ENCODE measurements at regions of chr14 and their contacts with region 1.

Region 1: GRCh38 chr14:91060351-91061055 is at the start of gene RPS6KA5:
- DNase-seq: peak; percentile 100
- ATAC-seq: peak; percentile 96 to 99 (median 98)
- H3K4me3 ChIP-seq: peak within 1 kb of the TSS; percentile 73 to 98 (median 90)
- H3K27ac ChIP-seq: peak within 1 kb of the TSS; percentile 82 to 98 (median 94)
- H3K4me1 ChIP-seq: peaks cover 0 to 41% (median 10%) of the 10 kb centered on the region in 9 donors
- H3K27me3 ChIP-seq: no peaks in the 10 kb centered on the region
- CTCF ChIP-seq: peak in 7 of 9 donors; percentile 15 to 48 (median 28)
- total RNA-seq, gene RPS6KA5: 7.3 to 22.5 (median 9.4) TPM

Region 2: DNA sequence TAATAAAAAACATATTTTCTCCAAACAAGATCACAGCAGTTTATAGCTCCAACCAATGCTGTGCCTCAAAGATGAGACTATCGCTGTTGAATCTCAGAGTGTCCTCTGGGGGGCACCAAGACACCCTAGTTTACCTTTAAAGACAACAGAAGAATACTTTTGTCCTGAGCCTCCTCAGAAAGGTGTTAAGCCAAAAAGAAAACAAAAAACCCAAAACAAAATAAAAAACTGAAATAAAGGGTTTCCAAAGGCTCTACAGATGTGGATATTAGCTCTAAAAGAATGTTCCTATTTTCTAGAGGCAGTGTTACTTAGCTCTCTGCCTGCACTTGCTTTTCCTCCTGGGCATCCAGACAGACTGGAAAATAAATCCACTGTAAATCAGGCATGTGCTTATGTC is 157.4 kb before region 1 on chr14:
- intact Hi-C with region 1: loop called in 3 of 10 experiments (anchors 5 to 10 kb)
- DNase-seq: peak in 1 of 2 donors; percentile 58
- ATAC-seq: peak in 7 of 8 donors; percentile 72 to 88 (median 81)
- H3K4me3 ChIP-seq: no peak overlapping the region
- H3K27ac ChIP-seq: no peak overlapping the region
- H3K4me1 ChIP-seq: no peaks in the 10 kb centered on the region
- H3K27me3 ChIP-seq: no peaks in the 10 kb centered on the region
- CTCF ChIP-seq: peak; percentile 29 to 84 (median 74)

Region 3: DNA sequence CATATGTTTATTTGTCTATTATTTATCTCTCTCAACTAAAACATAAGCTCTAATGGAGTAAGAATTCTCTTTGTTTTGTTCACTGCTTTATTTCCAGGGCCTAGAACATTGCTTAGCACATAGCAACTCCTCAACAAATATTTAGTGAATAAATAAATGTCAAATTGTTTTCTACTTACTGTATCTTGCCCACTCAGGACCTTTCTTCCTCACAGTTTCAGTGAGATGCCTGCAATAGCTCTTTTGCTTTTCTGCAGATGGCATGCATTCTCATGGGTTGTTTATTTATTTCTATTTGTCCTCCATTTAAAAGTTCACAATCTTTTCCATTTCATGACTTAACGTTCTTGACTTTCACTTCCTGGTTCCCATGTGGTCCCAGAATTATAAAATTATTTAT is 149.4 kb before region 1 on chr14:
- intact Hi-C with region 1: loop called in 3 of 10 experiments (anchors 5 to 10 kb)
- DNase-seq: no peak
- ATAC-seq: no peak
- H3K4me3 ChIP-seq: no peak overlapping the region
- H3K27ac ChIP-seq: no peak overlapping the region
- H3K4me1 ChIP-seq: no peaks in the 10 kb centered on the region
- H3K27me3 ChIP-seq: no peaks in the 10 kb centered on the region
- CTCF ChIP-seq: no peak

Region 4: DNA sequence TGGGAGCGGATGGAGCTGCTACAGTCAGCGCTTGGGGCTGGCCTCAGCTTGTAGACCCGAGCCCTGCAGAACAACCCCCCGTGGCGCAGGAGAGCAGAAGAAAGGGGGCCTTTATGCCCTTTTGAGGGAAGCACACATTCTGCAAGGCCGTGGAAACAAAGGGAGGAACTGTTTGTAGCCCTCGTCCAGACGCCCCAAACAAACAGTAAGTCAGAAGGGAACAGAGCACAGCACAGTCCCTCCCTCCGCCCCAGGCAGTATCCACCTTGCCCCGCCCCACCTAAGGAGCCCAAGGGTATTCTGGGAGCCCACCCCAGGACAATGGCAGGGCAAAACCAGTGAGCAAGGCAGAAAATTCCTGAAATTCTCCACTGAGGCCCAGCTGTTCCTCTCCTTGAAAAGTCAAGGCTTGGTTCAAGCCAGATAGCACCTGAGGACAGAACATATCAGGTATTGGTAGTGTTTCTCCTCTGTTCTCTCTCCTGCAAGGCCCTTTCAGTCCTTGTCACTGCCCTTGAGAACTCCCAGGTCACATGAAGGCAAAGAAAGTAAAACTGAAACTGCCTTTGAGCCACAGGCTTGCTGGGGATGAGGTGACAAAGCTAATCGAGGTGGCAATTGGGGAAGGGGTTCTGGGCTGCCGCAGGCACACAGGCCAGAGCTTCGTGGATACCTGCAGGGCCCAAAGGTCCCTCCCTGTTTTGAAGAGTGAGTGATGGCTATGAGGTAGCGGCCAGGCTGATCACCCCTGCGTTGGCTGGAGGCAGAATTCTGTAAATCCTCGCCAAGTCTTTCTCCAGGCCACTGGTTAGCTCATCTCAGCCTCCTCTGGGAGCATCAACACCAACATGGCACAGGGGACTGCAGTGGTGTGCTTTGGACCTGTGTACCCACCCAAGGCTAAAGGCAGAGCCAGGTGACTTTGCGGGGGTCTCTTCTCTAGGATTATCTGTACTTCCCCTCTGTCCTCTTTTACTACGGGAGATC is 53.9 kb after region 1 on chr14:
- intact Hi-C with region 1: loop called in 2 of 10 experiments (anchors 1 kb)
- DNase-seq: peak; percentile 21 to 68
- ATAC-seq: peak; percentile 75 to 89 (median 84)
- H3K4me3 ChIP-seq: peak overlapping the region; percentile 59 to 82 (median 72)
- H3K27ac ChIP-seq: peak overlapping the region; percentile 90 to 98 (median 94)
- H3K4me1 ChIP-seq: peaks cover 10 to 54% (median 51%) of the 10 kb centered on the region in 9 donors
- H3K27me3 ChIP-seq: no peaks in the 10 kb centered on the region
- CTCF ChIP-seq: no peak

Region 5: GRCh38 chr14:91119556-91120311 is 59.2 kb after region 1 on chr14:
- intact Hi-C with region 1: loop called in 3 of 10 experiments (anchors 1 to 10 kb)
- DNase-seq: no peak
- ATAC-seq: peak in 2 of 8 donors; percentile 25 to 74
- H3K4me3 ChIP-seq: no peak overlapping the region
- H3K27ac ChIP-seq: peak overlapping the region in 9 of 10 donors; percentile 11 to 75 (median 31)
- H3K4me1 ChIP-seq: peaks cover 17 to 83% (median 72%) of the 10 kb centered on the region in 9 donors
- H3K27me3 ChIP-seq: no peaks in the 10 kb centered on the region
- CTCF ChIP-seq: no peak

Region 6: DNA sequence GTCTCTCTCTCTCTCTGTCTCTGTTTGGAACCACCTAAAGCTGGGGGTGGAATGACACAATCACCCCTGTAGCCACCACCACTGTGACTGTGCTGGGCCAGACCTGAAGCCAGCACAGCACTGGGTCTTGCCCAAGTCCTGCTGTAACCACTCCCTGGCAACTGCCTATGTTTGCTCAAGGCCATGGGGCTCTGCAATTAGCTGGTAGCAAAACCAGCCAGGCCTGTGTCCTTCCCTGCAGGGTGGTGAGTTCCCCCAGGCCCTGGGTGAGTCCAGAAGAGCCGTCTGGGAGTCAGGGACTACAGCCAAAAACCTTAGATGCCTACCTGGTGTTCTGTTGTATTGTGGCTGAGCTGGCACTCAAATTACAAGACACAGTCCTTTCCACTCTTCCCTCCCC is 104.2 kb after region 1 on chr14:
- intact Hi-C with region 1: loop called in 1 of 10 experiments (anchors 5 kb)
- DNase-seq: peak; percentile 38 to 48
- ATAC-seq: peak; percentile 21 to 82 (median 74)
- H3K4me3 ChIP-seq: no peak overlapping the region
- H3K27ac ChIP-seq: peak overlapping the region in 7 of 10 donors; percentile 7 to 71 (median 51)
- H3K4me1 ChIP-seq: peaks cover 0 to 45% (median 12%) of the 10 kb centered on the region in 9 donors
- H3K27me3 ChIP-seq: no peaks in the 10 kb centered on the region
- CTCF ChIP-seq: no peak

Region 7: DNA sequence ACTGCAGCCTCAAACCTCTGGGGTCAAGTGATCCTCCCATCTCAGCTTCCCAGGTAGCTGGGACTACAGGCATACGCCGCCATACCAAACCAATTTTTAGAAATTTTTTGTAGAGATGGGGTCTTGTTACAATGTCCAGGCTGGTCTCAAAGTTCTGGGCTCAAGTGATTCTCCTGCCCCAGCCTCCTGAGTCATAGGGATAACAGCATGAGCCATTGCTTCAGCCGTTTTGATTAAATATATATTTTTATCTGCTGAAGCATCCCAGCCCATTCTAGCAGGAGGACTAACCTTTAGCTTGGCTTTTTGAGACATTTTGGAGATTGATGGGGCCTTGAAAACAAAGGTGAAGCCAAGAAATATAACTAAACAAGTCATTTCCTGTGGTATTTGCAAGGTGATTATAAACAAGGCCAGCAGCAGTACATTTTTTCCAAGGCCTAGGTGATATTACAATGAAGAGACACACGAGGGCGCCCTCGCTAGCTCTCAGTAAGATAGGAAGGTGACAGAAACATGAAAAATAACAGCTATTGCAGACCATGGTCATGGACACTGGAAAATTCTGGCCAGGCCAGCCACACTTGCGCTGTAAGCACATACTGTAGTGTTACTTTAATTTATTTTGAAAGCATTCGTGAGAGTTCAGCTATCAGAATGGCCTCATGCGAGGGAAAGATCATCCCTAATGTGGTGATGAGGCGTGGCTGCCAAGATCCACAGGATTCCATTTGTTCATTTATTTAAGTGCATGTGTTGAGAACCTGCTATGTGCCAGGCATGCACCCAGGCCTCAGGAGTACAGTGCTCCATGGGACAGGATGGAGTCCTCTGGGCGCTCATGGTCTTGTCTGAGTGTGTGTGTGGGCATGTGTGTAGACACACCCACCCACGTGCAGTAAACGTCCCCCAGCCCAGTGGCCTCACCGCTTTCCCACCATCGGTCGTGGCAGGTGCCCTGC is 116.9 kb after region 1 on chr14:
- intact Hi-C with region 1: loop called in 7 of 10 experiments (anchors 2 to 10 kb)
- DNase-seq: no peak
- ATAC-seq: peak in 7 of 8 donors; percentile 23 to 66 (median 54)
- H3K4me3 ChIP-seq: no peak overlapping the region
- H3K27ac ChIP-seq: peak overlapping the region in 3 of 10 donors; percentile 30 to 68 (median 55)
- H3K4me1 ChIP-seq: peaks cover 0 to 21% (median 7%) of the 10 kb centered on the region in 9 donors
- H3K27me3 ChIP-seq: no peaks in the 10 kb centered on the region
- CTCF ChIP-seq: peak; percentile 47 to 83 (median 76)

Measured in heart right ventricle (tissue), 16 donors.